Right ventricle myocardium superior (tissue), 1 donor: ENCODE measurements at regions of chr1 and their contacts with region 1.

Region 1: DNA sequence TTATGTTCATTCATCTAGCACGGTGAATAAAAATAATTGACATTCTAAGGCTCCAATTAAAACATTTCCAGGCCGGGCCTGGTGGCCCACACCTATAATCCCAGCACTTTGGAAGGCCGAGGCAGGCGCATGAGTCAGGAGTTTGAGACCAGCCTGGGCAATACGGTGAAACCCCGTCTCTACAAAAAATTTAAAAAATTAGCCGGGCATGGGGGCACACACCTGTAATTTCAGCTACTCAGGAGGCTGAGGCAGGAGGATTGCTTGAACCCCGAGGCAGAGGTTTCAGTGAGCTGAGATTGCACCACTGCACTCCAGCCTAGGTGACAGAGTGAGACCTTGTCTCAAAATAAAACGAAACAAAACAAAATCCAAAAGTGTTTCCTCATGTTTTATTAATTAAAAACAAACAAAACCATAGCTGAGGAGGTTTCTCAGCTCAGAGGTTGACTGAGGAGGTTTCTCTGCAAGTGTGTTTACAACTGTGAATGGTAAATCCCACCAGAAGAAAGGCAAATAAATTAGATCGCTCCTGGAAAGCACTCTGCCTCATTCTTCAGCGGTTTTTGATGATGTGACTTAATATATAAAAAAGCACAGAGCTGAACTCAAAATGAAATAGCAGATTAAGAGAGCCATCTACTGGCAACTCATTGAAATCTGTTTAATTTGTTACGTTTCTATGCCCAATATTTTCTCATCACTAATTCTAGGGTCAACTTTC is 37.7 kb upstream of the ATG4C start:
- DNase-seq: no peak
- ATAC-seq: peak; percentile 56

Region 2: GRCh38 chr1:62508187-62508758 is 238.0 kb before region 1 on chr1:
- intact Hi-C with region 1: loop called (anchors 10 kb)
- DNase-seq: no peak
- ATAC-seq: no peak

Region 3: GRCh38 chr1:62530516-62531154 is 215.6 kb before region 1 on chr1:
- intact Hi-C with region 1: loop called (anchors 10 kb)
- DNase-seq: peak; percentile 40
- ATAC-seq: peak; percentile 81

Region 4: DNA sequence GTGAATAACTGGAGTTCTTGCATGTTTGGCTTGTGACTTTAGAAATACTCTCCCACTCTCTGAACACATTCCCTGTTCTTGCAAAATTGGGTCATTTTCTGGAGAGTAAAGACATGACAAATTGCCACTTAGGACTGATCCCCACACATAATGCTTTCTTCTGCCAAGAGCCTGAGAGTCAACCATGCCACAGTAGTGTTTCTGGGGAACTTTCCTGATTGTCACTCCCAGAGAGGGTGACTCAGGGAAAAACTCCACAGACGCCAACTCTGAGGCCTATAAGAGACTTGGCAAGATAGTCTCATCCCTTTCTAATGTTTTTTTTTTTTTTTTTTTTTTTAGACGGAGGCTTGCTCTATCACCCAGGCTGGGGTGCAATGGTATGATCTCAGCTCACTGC is 195.5 kb after region 1 on chr1:
- intact Hi-C with region 1: no loop called
- DNase-seq: no peak
- ATAC-seq: no peak